ENCODE measurements at regions of chr15 and their contacts with region 1.

Region 1: GRCh38 chr15:84658080-84658787 is at the start of gene NMB:
- DNase-seq: peak; percentile 98
- H3K4me3 ChIP-seq: peak within 1 kb of the TSS; percentile 52 to 54; a peak in 3 of 4 replicates
- H3K27ac ChIP-seq: peak within 1 kb of the TSS; percentile 53 to 83
- H3K4me1 ChIP-seq: peaks cover 4 to 23% of the 10 kb centered on the region in 2 experiments; a peak in 2 of 4 replicates
- H3K27me3 ChIP-seq: no peaks in the 10 kb centered on the region
- CTCF ChIP-seq: peak; percentile 70
- EP300 ChIP-seq: no peak
- RAD21 ChIP-seq: peak; percentile 36
- polyA plus RNA-seq, gene NMB: 5.3 and 6.5 TPM in 2 replicates

Region 2: GRCh38 chr15:84588053-84588874 is 70.0 kb before region 1 on chr15:
- CTCF ChIA-PET with region 1: interaction called, 12 read pairs
- POLR2A ChIA-PET with region 1: interaction called, 3 read pairs
- DNase-seq: peak; percentile 94
- H3K4me3 ChIP-seq: peak overlapping the region; percentile 8 to 36; a peak in 2 of 4 replicates
- H3K27ac ChIP-seq: no peak overlapping the region
- H3K4me1 ChIP-seq: peaks cover 0 to 4% of the 10 kb centered on the region in 2 experiments; a peak in 1 of 4 replicates
- H3K27me3 ChIP-seq: no peaks in the 10 kb centered on the region
- CTCF ChIP-seq: peak; percentile 64
- EP300 ChIP-seq: no peak
- RAD21 ChIP-seq: peak; percentile 83

Region 3: GRCh38 chr15:84716036-84716799 is 58.0 kb after region 1 on chr15 and contains the start of gene SEC11A:
- CTCF ChIA-PET with region 1: interaction called, 9 read pairs
- POLR2A ChIA-PET with region 1: interaction called, 11 read pairs
- DNase-seq: peak; percentile 97
- H3K4me3 ChIP-seq: peak within 1 kb of the TSS; percentile 68 to 90
- H3K27ac ChIP-seq: peak within 1 kb of the TSS; percentile 92 to 93
- H3K4me1 ChIP-seq: peaks cover 5 to 7% of the 10 kb centered on the region in 2 experiments; a peak in 3 of 4 replicates
- H3K27me3 ChIP-seq: no peaks in the 10 kb centered on the region
- CTCF ChIP-seq: no peak
- EP300 ChIP-seq: peak in 1 of 2 experiments; percentile 18; a peak in 1 of 4 replicates
- RAD21 ChIP-seq: no peak
- polyA plus RNA-seq, gene SEC11A: 107 and 134 TPM in 2 replicates

Region 4: GRCh38 chr15:84879088-84879792 is 221.0 kb after region 1 on chr15:
- CTCF ChIA-PET with region 1: interaction called, 13 read pairs
- POLR2A ChIA-PET with region 1: no interaction called
- DNase-seq: no peak
- H3K4me3 ChIP-seq: no peak overlapping the region
- H3K27ac ChIP-seq: no peak overlapping the region
- H3K4me1 ChIP-seq: peaks cover 0 to 3% of the 10 kb centered on the region in 2 experiments; a peak in 1 of 4 replicates
- H3K27me3 ChIP-seq: no peaks in the 10 kb centered on the region
- CTCF ChIP-seq: no peak
- EP300 ChIP-seq: no peak
- RAD21 ChIP-seq: no peak

Measured in SK-N-SH (cell line).